SK-N-SH (cell line): ENCODE measurements at regions of chr12 and their contacts with region 1.

Region 1: DNA sequence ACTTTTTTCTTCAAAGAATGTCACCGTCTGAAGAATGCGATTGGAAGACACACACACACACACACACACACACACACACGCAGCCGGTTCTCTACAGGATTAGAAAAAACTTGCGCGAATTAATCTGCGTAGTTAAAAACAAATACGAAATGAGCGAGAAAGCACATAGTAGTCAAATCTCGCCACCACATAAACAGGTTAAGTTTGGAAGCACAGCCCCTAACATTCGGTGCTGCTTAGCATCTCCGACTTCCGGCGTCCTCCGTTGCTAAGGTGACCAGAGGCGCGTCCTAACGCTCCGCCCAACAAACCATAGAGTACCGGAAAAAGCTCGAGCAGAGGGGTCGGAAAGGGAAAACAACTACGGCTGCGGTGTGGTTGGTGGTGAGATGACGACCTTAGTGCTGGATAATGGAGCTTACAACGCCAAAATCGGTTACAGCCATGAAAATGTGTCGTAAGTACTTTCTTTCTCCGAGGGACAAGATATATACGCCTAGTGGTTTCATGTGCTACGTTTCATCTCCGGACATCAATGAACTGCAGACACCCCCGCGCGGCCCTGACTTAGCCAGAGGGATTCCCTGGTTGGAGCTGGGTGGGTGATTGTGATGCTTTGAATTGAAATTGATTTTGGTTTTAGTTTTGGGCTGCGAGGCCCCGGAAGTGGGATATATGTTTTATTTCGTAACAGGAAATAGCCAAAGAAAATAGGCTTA is at the start of gene ACTR6:
- DNase-seq: peak; percentile 90
- H3K4me3 ChIP-seq: peak within 1 kb of the TSS; percentile 79 to 96
- H3K27ac ChIP-seq: peak within 1 kb of the TSS; percentile 80 to 86
- H3K4me1 ChIP-seq: peaks cover 5 to 15% of the 10 kb centered on the region in 2 experiments; a peak in 2 of 4 replicates
- H3K27me3 ChIP-seq: no peaks in the 10 kb centered on the region
- CTCF ChIP-seq: no peak
- EP300 ChIP-seq: no peak
- RAD21 ChIP-seq: no peak; the same call in 1 of the 2 replicates
- polyA plus RNA-seq, gene ACTR6: 20.6 and 21.5 TPM in 2 replicates

Region 2: GRCh38 chr12:100163416-100164152 is 37.0 kb before region 1 on chr12:
- CTCF ChIA-PET with region 1: interaction called, 3 read pairs
- POLR2A ChIA-PET with region 1: interaction called, 12 read pairs
- DNase-seq: peak; percentile 90
- H3K4me3 ChIP-seq: peak overlapping the region; percentile 29 to 61
- H3K27ac ChIP-seq: peak overlapping the region in 1 of 2 experiments; percentile 48; a peak in 2 of 4 replicates
- H3K4me1 ChIP-seq: peaks cover 0 to 7% of the 10 kb centered on the region in 2 experiments; a peak in 2 of 4 replicates
- H3K27me3 ChIP-seq: no peaks in the 10 kb centered on the region
- CTCF ChIP-seq: peak; percentile 28; the same call in 1 of the 2 replicates
- EP300 ChIP-seq: no peak; a peak in 1 of 4 replicates
- RAD21 ChIP-seq: no peak

Region 3: DNA sequence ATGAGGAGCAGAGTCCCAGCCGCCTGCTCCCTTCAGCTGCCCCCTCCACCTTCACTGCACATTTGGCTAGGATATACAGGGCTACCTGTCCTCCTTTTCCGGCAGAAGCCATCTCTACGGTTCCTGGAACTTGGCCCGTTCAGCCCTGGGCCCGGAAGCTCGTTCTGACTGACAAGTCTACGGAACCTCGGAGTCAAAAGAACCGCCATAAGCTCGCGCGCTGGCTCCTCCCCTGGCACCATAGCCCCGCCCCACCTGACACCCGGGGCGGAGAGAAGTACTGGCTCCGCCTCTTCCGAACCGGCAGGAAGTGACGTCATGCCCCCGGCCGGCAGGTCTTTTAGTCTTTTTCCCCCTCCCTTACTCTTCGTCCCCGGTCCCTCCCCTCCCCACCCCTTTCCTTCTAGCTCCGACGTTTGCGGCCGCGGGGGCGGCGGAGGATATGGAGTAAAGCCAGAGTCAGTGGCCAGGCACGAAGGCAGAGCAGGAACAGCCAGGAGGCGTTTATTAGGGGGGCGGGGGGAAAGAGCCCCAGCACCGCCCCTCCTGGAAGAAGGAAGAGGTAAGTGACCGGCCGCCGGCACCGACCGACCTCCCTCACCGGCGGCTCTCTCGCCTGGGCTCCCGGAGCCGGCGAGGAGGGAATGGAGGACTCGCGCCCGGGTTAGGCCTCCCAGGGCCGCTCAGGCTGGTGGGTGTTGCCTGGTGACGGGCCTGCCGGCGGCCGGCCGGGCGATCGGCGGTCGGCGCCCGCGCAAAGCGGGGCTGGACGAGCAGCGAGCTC is 66.4 kb after region 1 on chr12 and contains the starts of genes DEPDC4 and SCYL2:
- CTCF ChIA-PET with region 1: no interaction called
- POLR2A ChIA-PET with region 1: interaction called, 11 read pairs
- DNase-seq: peak; percentile 94
- H3K4me3 ChIP-seq: peak within 1 kb of the TSS; percentile 79 to 88
- H3K27ac ChIP-seq: peak within 1 kb of the TSS; percentile 89 to 93
- H3K4me1 ChIP-seq: peaks cover 12 to 13% of the 10 kb centered on the region in 2 experiments; a peak in 3 of 4 replicates
- H3K27me3 ChIP-seq: no peaks in the 10 kb centered on the region
- CTCF ChIP-seq: no peak
- EP300 ChIP-seq: no peak; a peak in 2 of 4 replicates
- RAD21 ChIP-seq: no peak
- polyA plus RNA-seq, gene DEPDC4: 0.76 and 1.7 TPM in 2 replicates
- polyA plus RNA-seq, gene SCYL2: 7.5 and 9.7 TPM in 2 replicates